ENCODE measurements at regions of chr1 and their contacts with region 1.

Region 1: DNA sequence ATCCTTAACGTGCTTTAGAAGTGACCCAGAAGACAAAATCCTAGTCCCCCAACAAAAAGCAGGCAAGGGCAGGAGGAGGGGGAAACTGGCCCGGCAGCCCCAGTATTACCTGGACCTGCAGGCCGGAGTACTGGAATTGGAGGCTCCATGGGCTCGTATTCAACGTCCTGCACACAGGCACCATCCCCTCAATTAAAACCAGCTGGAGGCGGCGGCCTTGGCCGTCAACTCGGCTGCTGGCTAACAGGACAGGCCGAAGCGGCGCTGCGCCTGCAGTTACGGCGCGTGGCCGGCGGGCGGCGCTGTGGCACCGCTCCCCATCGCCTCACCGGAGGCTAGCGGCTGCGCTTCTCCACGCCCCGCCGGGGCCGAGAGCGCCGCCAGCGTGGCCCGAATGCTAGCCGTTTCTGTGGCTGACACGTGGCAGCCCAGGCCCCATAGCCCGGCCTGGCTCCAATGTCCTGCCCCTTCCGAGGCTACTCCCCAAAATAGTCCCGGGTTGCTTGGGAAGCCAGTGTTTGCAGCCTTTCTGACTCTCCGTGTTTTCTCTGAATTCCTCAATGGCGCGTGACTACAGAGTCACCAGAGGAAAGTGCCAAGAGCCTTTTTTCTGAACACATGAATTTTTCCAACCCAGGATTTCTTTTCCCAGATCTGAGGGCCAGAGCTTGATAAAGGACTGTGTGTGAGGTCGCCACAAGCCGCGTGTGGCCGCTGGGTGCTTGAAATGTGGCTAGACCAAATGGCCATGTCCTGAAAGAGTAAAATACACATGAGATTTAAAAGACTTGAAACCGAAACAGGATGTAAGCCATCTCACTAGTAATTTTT is 82.5 kb downstream of the HHIPL2 start:
- DNase-seq: peak; percentile 93 to 96
- ATAC-seq: peak; percentile 99 to 100
- H3K4me3 ChIP-seq: peak overlapping the region; percentile 44
- H3K27ac ChIP-seq: peak overlapping the region; percentile 87 to 91
- H3K4me1 ChIP-seq: peaks cover 8% of the 10 kb centered on the region
- CTCF ChIP-seq: peak; percentile 98
- EP300 ChIP-seq: no peak
- POLR2A ChIP-seq: peak; percentile 56
- RAD21 ChIP-seq: peak; percentile 87 to 100

Region 2: DNA sequence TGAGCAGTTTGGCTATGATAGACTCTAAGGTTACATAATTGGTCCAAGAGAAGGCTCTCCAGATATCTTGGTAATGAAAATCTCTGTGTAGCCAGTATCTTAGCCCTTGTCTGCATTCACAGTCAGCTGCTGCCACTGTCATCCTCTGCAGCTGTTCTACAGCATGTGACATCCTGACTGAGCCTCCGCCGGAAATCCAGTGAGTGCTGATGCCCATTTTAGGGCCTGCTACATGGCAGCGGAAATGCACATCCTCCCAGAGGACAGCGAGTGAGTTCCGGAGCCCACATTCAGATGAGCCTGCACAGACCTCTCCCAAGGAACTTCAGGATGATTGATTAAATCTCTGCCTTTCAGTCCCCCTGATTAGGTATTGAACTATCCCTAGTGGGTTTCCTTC is 154.6 kb before region 1 on chr1:
- CTCF ChIA-PET with region 1: no interaction called
- POLR2A ChIA-PET with region 1: no interaction called
- DNase-seq: no peak
- ATAC-seq: no peak
- H3K4me3 ChIP-seq: no peak overlapping the region
- H3K27ac ChIP-seq: no peak overlapping the region
- H3K4me1 ChIP-seq: no peaks in the 10 kb centered on the region
- CTCF ChIP-seq: no peak
- EP300 ChIP-seq: no peak
- POLR2A ChIP-seq: no peak
- RAD21 ChIP-seq: no peak

Region 3: DNA sequence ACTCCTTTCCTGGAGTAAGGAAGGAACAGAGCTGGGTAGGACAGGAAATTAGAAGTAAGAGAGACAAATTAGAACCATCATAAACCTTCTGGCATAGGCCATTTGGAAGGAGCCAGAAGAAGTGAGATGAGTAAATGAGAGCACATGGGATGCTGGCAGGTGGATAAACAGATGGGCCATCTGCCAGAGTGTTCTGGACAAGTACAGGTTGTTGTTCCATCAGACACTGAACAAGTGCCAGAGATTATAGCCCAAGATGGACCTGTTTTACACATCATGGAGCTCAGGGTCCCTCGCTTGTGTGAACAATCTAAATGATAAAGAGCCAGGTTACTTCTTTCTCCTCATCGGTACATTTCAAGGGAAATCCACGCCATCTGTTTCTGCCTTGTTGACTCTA is 117.8 kb before region 1 on chr1:
- CTCF ChIA-PET with region 1: no interaction called
- POLR2A ChIA-PET with region 1: no interaction called
- DNase-seq: no peak
- ATAC-seq: no peak
- H3K4me3 ChIP-seq: no peak overlapping the region
- H3K27ac ChIP-seq: no peak overlapping the region
- H3K4me1 ChIP-seq: no peaks in the 10 kb centered on the region
- CTCF ChIP-seq: no peak
- EP300 ChIP-seq: no peak
- POLR2A ChIP-seq: no peak
- RAD21 ChIP-seq: no peak

Region 4: DNA sequence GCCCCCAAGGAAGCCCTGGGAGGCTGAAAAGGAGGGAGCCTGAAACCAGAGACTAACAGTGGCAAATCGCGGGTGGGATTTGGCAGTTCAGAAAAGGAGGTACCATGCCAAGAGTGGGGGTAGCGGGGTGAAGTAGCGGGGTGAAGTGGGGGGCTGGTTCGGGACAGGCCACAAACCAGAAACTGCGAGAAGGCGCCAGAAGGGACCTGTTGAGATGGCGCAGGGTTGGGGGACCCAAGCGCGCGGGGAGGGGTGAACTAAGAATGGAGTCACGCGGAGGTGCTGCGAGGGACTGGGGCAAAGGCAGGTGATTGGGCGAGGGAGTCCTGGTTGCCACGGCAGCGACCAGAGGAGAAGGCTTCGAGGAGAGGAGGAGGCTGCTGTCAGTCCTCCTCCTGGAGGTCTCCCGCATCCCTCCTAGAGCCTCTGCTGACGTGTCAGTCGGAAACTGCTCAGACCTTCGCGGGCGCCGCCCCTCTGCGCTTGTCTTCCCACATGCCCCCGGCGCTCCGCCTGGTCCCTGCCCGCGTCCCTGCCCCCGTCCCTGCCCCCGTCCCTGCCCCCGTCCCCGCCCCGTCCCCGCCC is 152.0 kb after region 1 on chr1:
- CTCF ChIA-PET with region 1: interaction called, 19 read pairs
- POLR2A ChIA-PET with region 1: no interaction called
- DNase-seq: peak; percentile 77 to 90
- ATAC-seq: peak; percentile 95
- H3K4me3 ChIP-seq: peak overlapping the region; percentile 59
- H3K27ac ChIP-seq: peak overlapping the region; percentile 64 to 84; a peak in 5 of 6 replicates
- H3K4me1 ChIP-seq: peaks cover 8% of the 10 kb centered on the region; the same call in 2 of the 3 replicates
- CTCF ChIP-seq: no peak
- EP300 ChIP-seq: no peak
- POLR2A ChIP-seq: no peak
- RAD21 ChIP-seq: no peak

Region 5: GRCh38 chr1:222627232-222627631 is 161.8 kb after region 1 on chr1:
- CTCF ChIA-PET with region 1: interaction called, 99 read pairs
- POLR2A ChIA-PET with region 1: no interaction called
- DNase-seq: no peak
- ATAC-seq: no peak
- H3K4me3 ChIP-seq: no peak overlapping the region
- H3K27ac ChIP-seq: no peak overlapping the region
- H3K4me1 ChIP-seq: no peaks in the 10 kb centered on the region
- CTCF ChIP-seq: no peak
- EP300 ChIP-seq: no peak
- POLR2A ChIP-seq: no peak
- RAD21 ChIP-seq: no peak

Region 6: DNA sequence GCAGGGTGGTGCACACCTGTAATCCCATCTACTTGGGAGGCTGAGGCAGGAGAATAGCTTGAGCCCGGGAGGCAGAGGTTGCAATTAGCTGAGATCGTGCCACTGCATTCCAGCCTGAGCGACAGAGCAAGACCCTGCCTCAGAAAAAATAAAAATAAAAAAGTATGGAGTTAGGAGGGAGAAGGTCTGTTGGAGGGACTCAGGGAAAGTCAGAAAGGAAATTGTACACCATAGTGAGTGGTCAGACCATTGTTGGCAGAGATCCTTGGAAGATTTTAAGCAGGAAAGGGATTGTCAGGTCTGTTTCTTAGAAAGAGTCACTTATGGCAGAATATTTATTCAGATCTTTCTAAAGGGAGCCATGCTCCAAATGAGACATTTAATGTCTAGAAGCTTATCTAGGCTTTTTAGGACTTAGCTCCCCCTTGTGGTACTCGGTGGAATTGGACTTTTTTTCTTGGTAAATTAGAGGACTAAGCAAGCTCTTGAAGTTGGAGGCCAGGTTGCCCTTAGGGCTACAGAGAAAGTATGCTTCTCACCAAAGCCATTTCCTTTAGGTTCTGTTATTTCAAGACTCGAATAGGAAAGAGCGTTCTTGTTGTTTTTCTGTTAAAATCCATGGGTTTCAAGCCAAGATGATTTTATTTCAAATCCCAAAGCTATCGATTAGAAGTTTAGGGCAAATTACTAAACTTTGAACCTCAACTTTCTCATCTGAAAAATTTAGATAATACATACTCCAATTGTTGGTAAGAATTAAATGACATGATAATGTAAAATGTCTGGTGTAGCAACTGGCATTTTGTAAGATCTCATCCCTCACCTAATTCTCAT is 169.0 kb after region 1 on chr1:
- CTCF ChIA-PET with region 1: interaction called, 99 read pairs
- POLR2A ChIA-PET with region 1: interaction called, 8 read pairs
- DNase-seq: peak; percentile 71 to 89
- ATAC-seq: peak; percentile 87 to 95
- H3K4me3 ChIP-seq: no peak overlapping the region
- H3K27ac ChIP-seq: no peak overlapping the region
- H3K4me1 ChIP-seq: no peaks in the 10 kb centered on the region
- CTCF ChIP-seq: peak; percentile 93
- EP300 ChIP-seq: no peak
- POLR2A ChIP-seq: no peak
- RAD21 ChIP-seq: peak; percentile 81

Region 7: DNA sequence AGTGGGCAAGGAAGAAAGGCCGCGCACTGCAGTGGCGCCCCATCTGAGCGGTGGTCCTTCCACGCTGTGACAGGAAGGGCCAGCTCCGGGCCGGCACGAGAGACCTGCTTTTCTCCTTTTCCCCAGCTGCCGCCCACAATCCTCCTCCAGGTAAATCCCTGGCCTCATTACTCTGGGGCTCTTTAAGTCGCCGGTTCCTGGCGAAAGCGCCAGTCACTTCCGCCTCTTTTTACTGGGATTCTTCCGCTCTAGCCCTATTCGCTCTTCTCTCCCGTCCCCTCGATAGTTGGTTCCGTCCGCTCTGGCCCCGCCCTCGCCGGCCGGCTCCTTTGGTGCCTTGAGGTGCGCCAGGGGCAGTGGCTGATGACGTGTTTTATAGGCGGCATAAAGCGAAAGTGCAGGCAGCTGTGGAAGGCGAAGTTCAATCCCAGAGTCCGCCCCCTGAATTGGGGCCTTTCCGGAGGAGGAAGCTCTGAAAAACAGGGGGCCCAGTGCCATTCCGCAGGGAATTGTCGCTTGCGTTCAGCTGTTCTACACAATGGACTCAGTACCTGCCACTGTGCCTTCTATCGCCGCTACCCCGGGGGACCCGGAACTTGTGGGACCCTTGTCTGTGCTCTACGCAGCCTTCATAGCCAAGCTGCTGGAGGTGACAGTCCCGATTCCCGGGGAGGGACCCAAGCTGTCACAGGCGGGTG is 178.7 kb after region 1 on chr1:
- CTCF ChIA-PET with region 1: interaction called, 18 read pairs
- POLR2A ChIA-PET with region 1: interaction called, 25 read pairs
- DNase-seq: peak; percentile 80 to 99
- ATAC-seq: peak; percentile 97 to 98
- H3K4me3 ChIP-seq: peak overlapping the region; percentile 88
- H3K27ac ChIP-seq: peak overlapping the region; percentile 98
- H3K4me1 ChIP-seq: peaks cover 18% of the 10 kb centered on the region
- CTCF ChIP-seq: no peak
- EP300 ChIP-seq: no peak
- POLR2A ChIP-seq: peak; percentile 49
- RAD21 ChIP-seq: no peak

Region 8: DNA sequence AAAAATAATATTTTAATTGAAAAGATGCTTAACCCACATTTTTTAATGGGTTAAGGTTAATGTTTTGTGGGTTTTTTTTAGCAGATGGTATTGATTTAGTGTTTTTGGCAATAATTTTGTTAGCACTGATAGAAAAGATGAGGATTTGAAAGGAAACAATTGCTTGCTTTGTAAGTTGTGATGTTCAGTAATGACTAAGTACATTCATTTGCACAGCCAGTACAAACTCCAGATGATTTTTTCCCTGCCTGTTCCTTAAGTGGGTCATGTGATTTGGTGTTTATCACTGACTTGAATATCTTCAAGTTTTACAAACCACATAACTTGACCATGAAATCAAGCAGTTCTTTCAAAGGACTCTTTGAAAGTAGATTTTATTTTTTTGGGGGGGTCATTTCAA is 364.4 kb after region 1 on chr1:
- CTCF ChIA-PET with region 1: no interaction called
- POLR2A ChIA-PET with region 1: no interaction called
- DNase-seq: no peak
- ATAC-seq: no peak
- H3K4me3 ChIP-seq: no peak overlapping the region
- H3K27ac ChIP-seq: no peak overlapping the region
- H3K4me1 ChIP-seq: peaks cover 19% of the 10 kb centered on the region
- CTCF ChIP-seq: no peak
- EP300 ChIP-seq: no peak
- POLR2A ChIP-seq: no peak
- RAD21 ChIP-seq: no peak